ENCODE measurements at regions of chr6 and their contacts with region 1.

Region 1: GRCh38 chr6:30061092-30061857 is at the start of gene POLR1H:
- DNase-seq: peak; percentile 73
- ATAC-seq: peak; percentile 91
- H3K4me3 Mint-ChIP-seq: peak within 1 kb of the TSS; percentile 98
- H3K27ac Mint-ChIP-seq: peak within 1 kb of the TSS; percentile 97
- H3K4me1 Mint-ChIP-seq: peaks cover 44% of the 10 kb centered on the region
- H3K27me3 Mint-ChIP-seq: no peaks in the 10 kb centered on the region
- CTCF ChIP-seq: no peak
- total RNA-seq, gene POLR1H: 44.1 and 50.5 TPM in 2 replicates

Region 2: GRCh38 chr6:30130887-30131862 is 69.9 kb after region 1 on chr6:
- CTCF ChIA-PET with region 1: interaction called, 14 read pairs
- POLR2A ChIA-PET with region 1: interaction called, 3 read pairs
- intact Hi-C with region 1: no loop called
- DNase-seq: no peak
- ATAC-seq: peak; percentile 89
- H3K4me3 Mint-ChIP-seq: no peak overlapping the region
- H3K27ac Mint-ChIP-seq: no peak overlapping the region
- H3K4me1 Mint-ChIP-seq: peaks cover 15% of the 10 kb centered on the region
- H3K27me3 Mint-ChIP-seq: peaks cover 62% of the 10 kb centered on the region
- CTCF ChIP-seq: peak; percentile 83

Region 3: GRCh38 chr6:30200551-30201281 is 139.4 kb after region 1 on chr6:
- CTCF ChIA-PET with region 1: no interaction called
- POLR2A ChIA-PET with region 1: no interaction called
- intact Hi-C with region 1: no loop called
- DNase-seq: no peak
- ATAC-seq: peak; percentile 93
- H3K4me3 Mint-ChIP-seq: peak overlapping the region; percentile 48
- H3K27ac Mint-ChIP-seq: peak overlapping the region; percentile 83
- H3K4me1 Mint-ChIP-seq: peaks cover 44% of the 10 kb centered on the region
- H3K27me3 Mint-ChIP-seq: no peaks in the 10 kb centered on the region
- CTCF ChIP-seq: no peak

Region 4: DNA sequence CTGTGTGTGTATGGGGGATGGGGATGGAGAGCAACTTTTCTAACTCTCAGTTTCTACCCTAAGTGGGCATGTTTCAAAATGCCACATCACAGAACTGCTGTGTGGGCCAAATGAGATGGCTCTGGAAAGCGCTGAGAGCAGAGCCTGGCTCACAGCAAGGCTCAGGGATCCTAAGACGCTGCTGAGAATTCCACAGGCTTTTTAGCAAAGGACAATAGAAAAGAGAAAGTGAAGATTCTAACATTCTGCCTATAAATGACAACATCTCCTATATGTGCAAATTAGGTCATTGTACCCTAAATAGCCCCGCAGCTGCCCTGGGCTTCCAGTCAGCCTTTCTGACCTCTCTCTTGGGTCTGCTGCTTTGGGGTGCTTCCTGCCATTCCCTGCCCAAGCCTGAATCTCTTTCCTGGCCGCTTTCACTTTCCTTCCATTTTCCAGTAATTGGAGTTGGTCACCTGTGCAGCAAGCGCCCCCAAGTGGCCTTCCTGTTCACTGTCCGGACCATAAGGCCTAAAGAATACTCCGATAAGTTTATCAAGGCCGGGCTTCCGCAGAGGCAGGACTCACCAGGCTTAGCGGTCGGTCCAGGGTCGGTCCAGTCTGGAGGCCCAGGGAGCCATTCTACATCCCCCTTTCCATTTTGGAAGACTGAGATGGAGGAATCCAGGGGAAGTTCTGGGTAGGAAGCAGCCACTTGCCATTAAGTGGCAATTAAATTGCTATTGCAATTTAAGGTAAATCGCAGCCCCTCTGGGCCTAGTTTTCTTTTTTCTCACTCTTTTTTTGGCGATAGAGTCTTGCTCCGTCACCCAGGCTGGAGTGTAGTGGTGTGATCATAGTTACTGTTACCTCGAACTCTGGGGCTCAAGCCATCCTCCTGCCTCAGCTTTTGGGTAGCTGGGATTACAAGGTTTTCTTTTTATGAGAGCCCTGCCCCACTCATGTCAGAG is 816.4 kb after region 1 on chr6:
- CTCF ChIA-PET with region 1: no interaction called
- POLR2A ChIA-PET with region 1: no interaction called
- intact Hi-C with region 1: no loop called
- DNase-seq: peak; percentile 51
- ATAC-seq: peak; percentile 84
- H3K4me3 Mint-ChIP-seq: no peak overlapping the region
- H3K27ac Mint-ChIP-seq: no peak overlapping the region
- H3K4me1 Mint-ChIP-seq: peaks cover 37% of the 10 kb centered on the region
- H3K27me3 Mint-ChIP-seq: no peaks in the 10 kb centered on the region
- CTCF ChIP-seq: peak; percentile 19